Activated CD4-positive, alpha-beta T cell treated with anti-CD3 and anti-CD28 coated beads for 36 hours (primary cell): ENCODE measurements at regions of chr2 and their contacts with region 1.

Region 1: DNA sequence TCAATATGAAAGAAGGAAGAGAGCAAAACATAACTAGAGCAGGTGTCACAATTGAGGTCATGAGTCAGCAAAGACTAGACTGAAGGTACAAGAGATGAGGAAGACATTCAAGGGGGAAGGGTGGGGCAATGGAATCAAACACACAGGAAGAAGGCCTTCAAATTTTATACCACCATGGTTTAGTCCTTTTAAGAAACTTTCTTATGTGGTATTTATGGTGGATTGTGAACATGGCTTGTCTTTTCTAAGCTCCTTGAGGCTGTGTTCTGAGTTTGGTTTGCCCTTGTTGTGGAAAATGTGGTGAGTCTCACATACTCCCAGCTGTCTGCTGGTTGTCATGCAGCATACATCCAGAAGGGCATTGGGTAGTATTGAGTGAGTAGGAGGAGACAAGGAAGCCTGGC is 62.1 kb downstream of the NABP1 start:
- DNase-seq: peak; percentile 56
- ATAC-seq: peak; percentile 97
- H3K4me3 Mint-ChIP-seq: no peak overlapping the region
- H3K27ac Mint-ChIP-seq: peak overlapping the region; percentile 66
- H3K4me1 Mint-ChIP-seq: peaks cover 12% of the 10 kb centered on the region
- H3K27me3 Mint-ChIP-seq: peaks cover 10% of the 10 kb centered on the region

Region 2: DNA sequence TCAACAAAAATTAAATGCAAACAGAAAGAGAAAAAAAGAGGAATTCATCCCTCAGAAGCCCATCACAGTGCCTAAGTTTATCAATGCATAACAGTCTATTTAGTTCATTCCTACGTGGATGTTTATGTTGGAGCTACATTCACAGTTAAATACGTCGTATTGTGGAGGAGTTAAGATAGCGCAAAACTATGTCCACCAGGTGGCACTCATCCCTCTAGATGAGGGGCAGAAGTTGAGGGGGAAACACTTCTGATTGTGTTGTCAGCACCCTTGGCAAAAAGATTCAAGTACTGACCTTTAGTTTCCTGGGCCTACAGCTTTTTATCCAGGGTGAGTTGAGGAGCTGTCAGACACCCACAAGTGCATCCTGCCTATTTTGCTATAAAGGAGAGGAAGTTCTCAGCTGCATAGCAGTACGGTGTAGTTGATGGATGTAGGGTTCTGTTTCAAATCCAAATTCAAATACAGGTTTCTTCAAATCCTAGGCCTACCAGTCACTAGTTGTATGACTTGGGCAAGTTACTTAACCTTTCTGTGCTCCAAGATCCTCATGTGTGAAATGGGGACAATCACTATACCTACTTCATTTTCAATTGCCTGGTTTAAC is 521.6 kb before region 1 on chr2:
- CTCF ChIA-PET with region 1: no interaction called
- POLR2A ChIA-PET with region 1: no interaction called
- intact Hi-C with region 1: no loop called
- DNase-seq: peak; percentile 69
- ATAC-seq: peak; percentile 62
- H3K4me3 Mint-ChIP-seq: no peak overlapping the region
- H3K27ac Mint-ChIP-seq: no peak overlapping the region
- H3K4me1 Mint-ChIP-seq: peaks cover 32% of the 10 kb centered on the region
- H3K27me3 Mint-ChIP-seq: no peaks in the 10 kb centered on the region

Region 3: GRCh38 chr2:191642541-191642940 is 97.5 kb before region 1 on chr2:
- CTCF ChIA-PET with region 1: no interaction called
- POLR2A ChIA-PET with region 1: no interaction called
- intact Hi-C with region 1: loop called in 1 of 2 experiments (anchors 2 kb)
- DNase-seq: no peak
- ATAC-seq: peak; percentile 37
- H3K4me3 Mint-ChIP-seq: no peak overlapping the region
- H3K27ac Mint-ChIP-seq: peak overlapping the region; percentile 35
- H3K4me1 Mint-ChIP-seq: peaks cover 42% of the 10 kb centered on the region
- H3K27me3 Mint-ChIP-seq: no peaks in the 10 kb centered on the region